Activated naive CD4-positive, alpha-beta T cell treated with anti-CD3 and anti-CD28 coated beads for 36 hours (primary cell): ENCODE measurements at regions of chr9 and their contacts with region 1.

Region 1: GRCh38 chr9:21121595-21122251 is 19.9 kb downstream of the IFNW1 start:
- DNase-seq: peak; percentile 7
- H3K4me3 Mint-ChIP-seq: no peak overlapping the region
- H3K27ac Mint-ChIP-seq: no peak overlapping the region
- H3K4me1 Mint-ChIP-seq: peaks cover 2% of the 10 kb centered on the region
- H3K27me3 Mint-ChIP-seq: peaks cover 1% of the 10 kb centered on the region

Region 2: DNA sequence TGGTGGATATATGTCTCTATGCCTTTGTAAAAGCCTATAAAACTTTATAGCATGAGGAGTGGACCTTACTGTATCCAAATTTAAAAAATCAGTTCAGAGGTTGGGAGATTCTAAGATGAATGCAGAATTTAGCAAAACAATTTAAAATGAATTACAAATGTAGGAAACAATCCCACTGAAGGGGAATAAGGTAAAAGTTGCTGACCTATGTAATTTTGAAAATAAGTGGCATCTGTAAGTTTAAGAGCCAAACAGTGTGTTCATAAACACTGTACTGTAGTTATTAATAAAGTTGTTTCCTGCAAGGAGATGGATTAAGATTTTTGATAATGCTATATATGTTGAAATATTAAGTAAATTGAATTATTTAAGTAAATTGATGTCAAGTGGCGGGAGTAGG is 15.3 kb after region 1 on chr9:
- CTCF ChIA-PET with region 1: no interaction called
- intact Hi-C with region 1: loop called (anchors 1 kb)
- DNase-seq: no peak
- H3K4me3 Mint-ChIP-seq: no peak overlapping the region
- H3K27ac Mint-ChIP-seq: no peak overlapping the region
- H3K4me1 Mint-ChIP-seq: peaks cover 2% of the 10 kb centered on the region
- H3K27me3 Mint-ChIP-seq: no peaks in the 10 kb centered on the region